Heart left ventricle (tissue), 16 donors: ENCODE measurements at regions of chr2 and their contacts with region 1.

Region 1: DNA sequence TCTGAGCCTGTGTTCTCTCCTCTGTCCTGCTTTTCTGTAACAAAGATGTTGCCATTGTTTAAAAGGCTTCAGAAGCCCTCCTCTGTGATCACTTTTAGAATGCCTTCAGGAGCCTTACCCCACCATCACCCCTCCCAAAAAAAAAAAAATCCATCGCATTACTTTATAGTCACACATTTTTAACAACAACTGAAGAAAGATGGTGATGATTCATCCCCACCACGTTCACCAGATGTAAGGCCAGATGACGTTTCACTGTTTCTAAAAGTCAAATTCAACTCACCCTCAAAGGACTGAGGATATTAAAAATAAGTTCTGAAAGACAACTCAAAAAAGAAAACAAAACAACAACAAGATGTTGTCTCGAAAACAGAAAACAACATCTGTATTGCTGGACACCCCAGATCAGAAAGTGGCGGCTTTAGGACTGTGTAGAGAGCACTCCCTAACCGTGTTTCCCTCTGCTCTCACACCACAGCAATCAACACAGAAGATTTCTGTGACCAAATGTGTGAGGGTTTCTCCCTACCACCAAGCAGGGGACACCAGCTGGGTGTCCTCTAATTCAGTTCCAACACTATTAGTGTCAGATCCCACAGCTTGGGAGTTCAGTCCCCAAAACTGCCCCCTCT is 61.9 kb upstream of the CREB1 start:
- DNase-seq: no peak
- ATAC-seq: peak in 1 of 4 donors; percentile 36
- H3K4me3 ChIP-seq: no peak overlapping the region
- H3K27ac ChIP-seq: no peak overlapping the region
- H3K4me1 ChIP-seq: peaks cover 0 to 6% (median 4%) of the 10 kb centered on the region in 12 donors
- H3K27me3 ChIP-seq: no peaks in the 10 kb centered on the region
- CTCF ChIP-seq: no peak
- POLR2A ChIP-seq: no peak

Region 2: GRCh38 chr2:207176247-207176646 is 291.6 kb before region 1 on chr2:
- intact Hi-C with region 1: loop called in 1 of 10 experiments (anchors 10 kb)
- DNase-seq: no peak
- ATAC-seq: no peak
- H3K4me3 ChIP-seq: no peak overlapping the region
- H3K27ac ChIP-seq: no peak overlapping the region
- H3K4me1 ChIP-seq: peaks cover 0 to 9% (median 0%) of the 10 kb centered on the region in 12 donors
- H3K27me3 ChIP-seq: no peaks in the 10 kb centered on the region
- CTCF ChIP-seq: no peak
- POLR2A ChIP-seq: no peak

Region 3: DNA sequence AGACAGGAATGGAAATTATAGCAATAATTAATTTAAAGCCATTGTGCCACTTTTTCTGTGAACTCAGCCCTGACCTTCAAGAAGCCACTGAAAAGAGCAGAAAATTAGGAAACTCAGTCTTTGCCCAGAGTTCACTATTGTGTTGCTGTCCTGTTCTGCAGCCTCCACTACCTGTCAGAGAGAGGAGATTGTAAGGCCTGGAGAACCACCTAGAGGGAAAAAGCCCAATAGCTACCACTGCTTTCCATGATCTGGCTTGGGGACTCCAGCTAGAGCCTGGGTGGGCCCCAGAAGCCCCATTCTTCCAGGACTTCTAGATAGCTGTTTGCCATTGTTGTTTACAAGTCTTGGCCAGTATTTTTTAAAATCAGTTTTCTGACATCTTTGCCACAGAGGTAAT is 126.0 kb before region 1 on chr2:
- intact Hi-C with region 1: loop called in 4 of 10 experiments (anchors 5 to 10 kb)
- DNase-seq: no peak
- ATAC-seq: no peak
- H3K4me3 ChIP-seq: no peak overlapping the region
- H3K27ac ChIP-seq: no peak overlapping the region
- H3K4me1 ChIP-seq: peaks cover 0 to 31% (median 13%) of the 10 kb centered on the region in 12 donors
- H3K27me3 ChIP-seq: no peaks in the 10 kb centered on the region
- CTCF ChIP-seq: peak in 1 of 12 donors; percentile 20
- POLR2A ChIP-seq: no peak